Activated CD8-positive, alpha-beta memory T cell treated with anti-CD3 and anti-CD28 coated beads, Interleukin-2, amount 10 ng/mL, durations not matched to agents 7 days and 5 days (primary cell): ENCODE measurements at regions of chr9 and their contacts with region 1.

Region 1: GRCh38 chr9:114696814-114697544 is 15.0 kb upstream of the TEX48 start:
- DNase-seq: peak; percentile 95
- ATAC-seq: peak; percentile 74
- H3K4me3 Mint-ChIP-seq: peak overlapping the region; percentile 51
- H3K27ac Mint-ChIP-seq: peak overlapping the region; percentile 98
- H3K4me1 Mint-ChIP-seq: peaks cover 86% of the 10 kb centered on the region
- H3K27me3 Mint-ChIP-seq: peaks cover 26% of the 10 kb centered on the region

Region 2: DNA sequence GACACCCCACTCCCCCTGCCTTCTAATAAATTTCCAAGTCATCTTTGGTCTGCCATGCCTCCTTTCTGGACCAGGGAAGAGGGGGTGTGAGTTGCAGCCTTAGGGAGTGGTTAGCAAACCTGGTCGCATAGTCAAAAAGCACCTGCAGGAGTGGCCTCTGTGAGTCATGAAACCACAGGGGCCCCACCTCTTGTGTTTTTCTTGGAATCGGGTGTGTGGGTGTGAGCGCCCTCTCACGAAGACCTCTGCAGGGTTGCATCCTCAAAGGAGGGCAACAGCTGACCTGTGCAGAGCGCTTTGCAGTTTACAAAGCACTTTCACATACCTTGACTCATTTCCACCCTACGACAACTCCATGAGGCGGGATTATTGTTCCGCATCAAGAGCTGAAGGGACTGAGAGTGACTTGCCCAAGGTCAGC is 21.8 kb after region 1 on chr9:
- CTCF ChIA-PET with region 1: interaction called, 55 read pairs
- DNase-seq: peak; percentile 99
- ATAC-seq: peak; percentile 94
- H3K4me3 Mint-ChIP-seq: peak overlapping the region; percentile 50
- H3K27ac Mint-ChIP-seq: peak overlapping the region; percentile 94
- H3K4me1 Mint-ChIP-seq: peaks cover 63% of the 10 kb centered on the region
- H3K27me3 Mint-ChIP-seq: peaks cover 8% of the 10 kb centered on the region

Region 3: DNA sequence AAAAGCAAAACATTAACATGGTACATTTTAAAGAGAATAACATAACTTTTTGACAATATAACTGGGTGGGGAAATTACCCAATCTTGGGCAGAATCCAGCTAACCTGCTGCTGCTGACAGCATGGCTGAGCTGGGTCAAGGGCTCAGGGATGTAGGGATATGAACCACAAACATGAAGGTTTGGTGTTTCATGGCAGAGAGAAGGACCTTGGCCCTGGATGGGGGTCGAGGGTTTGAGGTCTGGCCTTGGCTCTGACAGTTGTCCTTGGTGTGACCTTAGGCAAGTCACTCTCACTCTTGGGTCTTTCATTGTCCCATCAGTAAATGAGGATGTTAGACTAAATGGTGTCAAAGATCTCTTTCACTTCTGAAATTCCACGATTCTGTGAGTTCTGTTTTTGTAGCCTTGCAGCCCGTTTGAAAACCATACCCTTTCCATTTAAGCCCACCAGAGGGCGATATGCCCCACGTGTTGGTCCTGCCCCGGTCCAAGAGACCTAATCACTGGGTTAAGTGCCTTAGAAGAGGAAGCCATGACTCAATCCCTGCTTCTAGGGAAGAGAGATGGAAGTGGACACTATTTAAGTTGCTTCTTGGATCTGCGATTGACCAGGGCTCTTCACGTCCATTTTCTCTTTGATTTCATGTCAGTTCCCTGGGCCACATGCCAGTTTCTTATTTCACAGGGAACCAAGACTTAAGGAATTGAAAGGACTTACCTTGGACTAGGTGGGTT is 41.8 kb after region 1 on chr9:
- CTCF ChIA-PET with region 1: interaction called, 29 read pairs
- DNase-seq: peak; percentile 84
- ATAC-seq: peak; percentile 83
- H3K4me3 Mint-ChIP-seq: no peak overlapping the region
- H3K27ac Mint-ChIP-seq: peak overlapping the region; percentile 89
- H3K4me1 Mint-ChIP-seq: peaks cover 58% of the 10 kb centered on the region
- H3K27me3 Mint-ChIP-seq: peaks cover 5% of the 10 kb centered on the region

Region 4: GRCh38 chr9:114754581-114754980 is 57.6 kb after region 1 on chr9:
- CTCF ChIA-PET with region 1: no interaction called
- DNase-seq: no peak
- ATAC-seq: peak; percentile 39
- H3K4me3 Mint-ChIP-seq: no peak overlapping the region
- H3K27ac Mint-ChIP-seq: peak overlapping the region; percentile 55
- H3K4me1 Mint-ChIP-seq: peaks cover 25% of the 10 kb centered on the region
- H3K27me3 Mint-ChIP-seq: no peaks in the 10 kb centered on the region